Aorta (tissue), 5 donors: ENCODE measurements at regions of chr11 and their contacts with region 1.

Region 1: GRCh38 chr11:3775736-3776406 is 21.5 kb downstream of the NUP98 start:
- DNase-seq: no peak
- ATAC-seq: no peak
- H3K4me3 ChIP-seq: no peak overlapping the region
- H3K27ac ChIP-seq: no peak overlapping the region
- H3K4me1 ChIP-seq: no peaks in the 10 kb centered on the region
- H3K27me3 ChIP-seq: no peaks in the 10 kb centered on the region

Region 2: DNA sequence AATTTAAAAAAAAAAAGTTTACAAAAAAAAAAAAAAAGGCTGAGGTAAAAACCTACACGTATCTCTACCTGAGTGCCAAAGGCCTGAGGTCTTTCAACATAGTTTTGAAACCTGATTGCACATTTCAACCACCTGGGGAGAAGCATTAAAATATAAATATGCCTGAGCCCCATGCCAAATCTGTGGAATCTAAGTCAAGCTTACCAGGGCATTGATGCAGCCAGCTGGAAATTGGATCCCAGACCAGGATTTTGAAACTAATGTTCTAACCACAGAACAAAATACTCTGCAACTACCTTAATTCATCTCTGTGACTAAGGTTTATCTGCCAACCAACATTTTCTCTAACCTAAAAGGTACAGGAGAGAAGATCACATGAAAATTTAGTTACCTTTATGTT is 65.9 kb before region 1 on chr11:
- intact Hi-C with region 1: loop called in 1 of 2 experiments (anchors 10 kb)
- DNase-seq: no peak
- ATAC-seq: no peak
- H3K4me3 ChIP-seq: no peak overlapping the region
- H3K27ac ChIP-seq: no peak overlapping the region
- H3K4me1 ChIP-seq: no peaks in the 10 kb centered on the region
- H3K27me3 ChIP-seq: no peaks in the 10 kb centered on the region